Activated CD4-positive, alpha-beta memory T cell treated with anti-CD3 and anti-CD28 coated beads, Interleukin-2, amount 10 ng/mL, durations not matched to agents 7 days and 5 days (primary cell): ENCODE measurements at regions of chr18 and their contacts with region 1.

Region 1: DNA sequence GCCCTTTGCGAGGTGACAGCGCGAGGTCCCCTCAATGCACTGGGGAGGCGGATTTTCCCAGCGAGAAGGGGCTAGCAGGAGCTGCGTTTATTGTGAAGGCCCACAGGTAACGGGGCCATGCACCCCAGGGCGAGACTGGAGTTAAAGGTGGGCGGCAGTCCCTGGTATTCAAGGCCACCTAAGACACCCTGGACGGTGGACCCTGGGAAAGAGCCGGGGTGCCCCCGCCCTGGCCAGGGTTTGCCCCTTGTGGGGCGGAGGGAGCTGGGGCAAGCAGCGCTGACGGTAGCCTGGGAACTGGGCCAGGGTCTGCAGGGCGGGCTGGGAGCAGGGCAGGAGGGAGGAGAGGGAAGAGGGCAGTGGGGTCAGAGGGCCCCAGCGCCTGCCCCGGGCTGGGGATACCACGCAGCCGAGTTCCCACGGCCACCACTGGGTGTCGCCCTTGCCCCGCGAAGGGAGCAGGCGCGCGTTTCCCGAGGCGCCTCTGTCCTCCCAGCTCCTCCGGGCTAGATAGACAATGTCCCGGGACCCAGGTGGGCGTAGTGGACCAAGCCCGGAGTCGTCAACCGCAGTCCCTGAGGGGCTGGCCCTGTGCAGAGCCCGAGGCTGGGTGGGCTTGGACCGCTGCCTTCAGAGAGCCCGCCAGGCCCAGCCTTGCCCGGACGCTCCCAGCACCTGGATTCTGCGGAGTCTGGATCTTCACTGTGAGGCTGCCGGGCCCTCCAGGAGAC is 80.2 kb downstream of the SMAD4 start:
- DNase-seq: peak; percentile 71
- H3K4me3 Mint-ChIP-seq: no peak overlapping the region
- H3K27ac Mint-ChIP-seq: no peak overlapping the region
- H3K4me1 Mint-ChIP-seq: peaks cover 22% of the 10 kb centered on the region
- H3K27me3 Mint-ChIP-seq: no peaks in the 10 kb centered on the region

Region 2: GRCh38 chr18:51229328-51229727 is 119.1 kb after region 1 on chr18:
- CTCF ChIA-PET with region 1: no interaction called
- POLR2A ChIA-PET with region 1: no interaction called
- DNase-seq: no peak
- H3K4me3 Mint-ChIP-seq: no peak overlapping the region
- H3K27ac Mint-ChIP-seq: no peak overlapping the region
- H3K4me1 Mint-ChIP-seq: peaks cover 9% of the 10 kb centered on the region
- H3K27me3 Mint-ChIP-seq: no peaks in the 10 kb centered on the region

Region 3: GRCh38 chr18:51385270-51385669 is 275.0 kb after region 1 on chr18:
- CTCF ChIA-PET with region 1: interaction called, 17 read pairs
- POLR2A ChIA-PET with region 1: no interaction called
- DNase-seq: no peak
- H3K4me3 Mint-ChIP-seq: no peak overlapping the region
- H3K27ac Mint-ChIP-seq: no peak overlapping the region
- H3K4me1 Mint-ChIP-seq: no peaks in the 10 kb centered on the region
- H3K27me3 Mint-ChIP-seq: peaks cover 9% of the 10 kb centered on the region

Region 4: GRCh38 chr18:51398104-51398503 is 287.9 kb after region 1 on chr18:
- CTCF ChIA-PET with region 1: no interaction called
- POLR2A ChIA-PET with region 1: no interaction called
- DNase-seq: no peak
- H3K4me3 Mint-ChIP-seq: no peak overlapping the region
- H3K27ac Mint-ChIP-seq: no peak overlapping the region
- H3K4me1 Mint-ChIP-seq: no peaks in the 10 kb centered on the region
- H3K27me3 Mint-ChIP-seq: peaks cover 12% of the 10 kb centered on the region